Mammary epithelial cell (primary cell): ENCODE measurements at regions of chr1 and their contacts with region 1.

Region 1: DNA sequence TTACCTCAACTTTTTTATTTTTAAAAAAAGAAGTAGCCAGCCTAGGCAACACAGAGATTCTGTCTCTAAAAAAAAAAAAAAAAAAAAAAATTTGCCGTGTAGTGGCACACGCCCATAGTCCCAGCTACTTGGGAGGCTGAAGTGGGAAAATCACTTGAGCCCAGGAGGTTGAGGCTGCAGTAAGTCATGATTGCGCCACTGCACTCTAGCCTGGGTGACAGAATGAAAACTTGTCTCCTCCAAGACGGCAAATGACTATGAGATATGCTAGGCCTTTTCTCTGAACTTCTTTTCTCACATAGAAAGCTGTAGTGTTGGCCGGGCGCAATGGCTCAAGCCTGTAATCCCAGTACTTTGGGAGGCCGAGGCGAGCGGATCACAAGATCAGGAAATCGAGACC is 24.7 kb upstream of the PTCH2 start:
- DNase-seq: no peak
- H3K4me3 ChIP-seq: no peak overlapping the region
- H3K27ac ChIP-seq: no peak overlapping the region
- H3K4me1 ChIP-seq: no peaks in the 10 kb centered on the region
- H3K27me3 ChIP-seq: no peaks in the 10 kb centered on the region
- CTCF ChIP-seq: no peak

Region 2: DNA sequence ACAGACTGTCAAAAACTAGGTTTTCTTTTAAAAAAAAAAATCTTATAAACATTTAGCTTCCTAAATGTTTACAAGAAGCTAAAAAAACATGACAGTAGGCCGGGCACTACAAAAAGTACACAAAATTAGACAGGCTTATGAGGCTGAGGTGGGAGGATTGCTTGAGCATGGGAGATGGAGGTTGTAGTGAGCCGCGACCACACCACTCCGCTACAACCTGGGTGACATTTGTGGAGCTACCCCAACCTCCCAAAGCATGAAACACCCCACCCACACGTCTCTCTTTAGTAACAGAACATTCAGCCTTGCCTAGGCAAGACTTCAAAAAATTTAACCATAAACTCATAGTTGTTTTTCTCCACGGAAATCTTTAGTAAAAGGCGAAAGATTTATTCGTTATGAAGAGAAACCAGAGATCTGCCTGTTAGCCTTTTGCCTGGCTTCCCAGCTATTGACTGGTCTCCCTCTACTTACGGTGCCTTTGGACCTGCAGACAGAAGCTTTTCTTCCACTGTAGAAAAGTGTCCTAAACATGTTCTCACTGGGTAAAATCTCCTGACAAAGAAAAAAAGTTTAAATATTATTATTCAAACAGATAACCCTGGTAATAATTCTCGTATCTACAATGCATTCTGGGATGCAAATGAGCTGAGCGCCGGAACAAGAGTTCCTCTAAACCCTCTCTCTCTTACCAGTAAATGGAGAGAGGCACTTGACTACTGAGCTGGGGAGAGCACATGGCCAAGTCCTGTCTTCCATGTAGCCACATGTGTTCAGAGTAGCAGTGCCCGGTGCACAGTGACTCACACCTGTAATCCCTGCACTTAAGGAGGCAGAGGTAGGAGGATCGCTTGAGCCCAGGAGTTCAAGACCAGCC is 146.1 kb before region 1 on chr1:
- CTCF ChIA-PET with region 1: no interaction called
- dilution Hi-C with region 1: no loop called
- in situ Hi-C with region 1: no loop called
- intact Hi-C with region 1: no loop called
- DNase-seq: peak; percentile 73
- H3K4me3 ChIP-seq: no peak overlapping the region
- H3K27ac ChIP-seq: peak overlapping the region; percentile 36
- H3K4me1 ChIP-seq: peaks cover 2% of the 10 kb centered on the region
- H3K27me3 ChIP-seq: no peaks in the 10 kb centered on the region
- CTCF ChIP-seq: no peak

Region 3: DNA sequence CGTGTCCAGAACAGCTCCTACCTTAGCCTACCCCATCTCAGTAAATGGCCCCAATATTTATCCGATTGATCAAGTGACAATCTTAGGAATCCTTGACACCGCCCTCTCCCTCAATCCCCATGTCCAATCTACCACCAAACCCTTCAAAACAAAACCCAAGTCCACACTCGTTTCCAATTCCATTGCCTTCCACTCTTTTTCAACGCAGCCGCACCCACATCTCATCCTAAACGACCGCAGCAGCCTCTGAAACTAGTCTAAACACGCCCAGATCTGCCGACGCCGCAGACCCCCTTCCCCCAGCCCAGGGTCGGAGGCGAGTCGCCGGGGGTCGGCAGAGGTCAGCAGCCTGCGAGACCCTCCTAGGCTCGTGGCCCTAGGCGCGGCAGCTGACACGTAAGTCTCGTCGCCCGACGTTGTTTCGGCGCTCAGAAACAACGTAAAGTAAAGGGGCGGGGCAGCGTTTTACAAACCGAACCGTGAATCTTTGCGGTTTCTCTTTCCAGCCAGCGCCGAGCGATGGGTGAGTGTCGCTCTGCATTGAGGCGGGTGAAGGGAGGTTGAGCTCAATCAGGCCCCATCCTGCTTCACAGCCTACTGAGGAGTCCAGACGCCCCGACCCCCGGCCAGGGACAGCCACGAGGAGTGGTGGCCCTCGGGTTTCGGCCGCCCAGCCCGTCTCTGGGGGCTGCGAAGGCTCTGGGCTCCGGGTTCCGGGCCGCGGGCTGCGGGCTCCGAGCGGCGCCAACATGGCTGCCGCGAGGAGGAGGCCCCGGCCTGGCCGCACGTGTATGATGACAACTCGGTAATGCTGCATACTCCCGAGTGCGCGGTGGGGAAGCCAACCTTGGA is 92.5 kb before region 1 on chr1 and contains the start of gene RPS8:
- CTCF ChIA-PET with region 1: no interaction called
- dilution Hi-C with region 1: loop called (anchors 5 kb)
- in situ Hi-C with region 1: no loop called
- intact Hi-C with region 1: no loop called
- DNase-seq: peak; percentile 92
- H3K4me3 ChIP-seq: peak within 1 kb of the TSS; percentile 83 to 92 (median 86)
- H3K27ac ChIP-seq: peak within 1 kb of the TSS; percentile 98
- H3K4me1 ChIP-seq: peaks cover 15% of the 10 kb centered on the region
- H3K27me3 ChIP-seq: no peaks in the 10 kb centered on the region
- CTCF ChIP-seq: no peak
- total RNA-seq, gene RPS8: 1,053 to 1,537 TPM

Region 4: DNA sequence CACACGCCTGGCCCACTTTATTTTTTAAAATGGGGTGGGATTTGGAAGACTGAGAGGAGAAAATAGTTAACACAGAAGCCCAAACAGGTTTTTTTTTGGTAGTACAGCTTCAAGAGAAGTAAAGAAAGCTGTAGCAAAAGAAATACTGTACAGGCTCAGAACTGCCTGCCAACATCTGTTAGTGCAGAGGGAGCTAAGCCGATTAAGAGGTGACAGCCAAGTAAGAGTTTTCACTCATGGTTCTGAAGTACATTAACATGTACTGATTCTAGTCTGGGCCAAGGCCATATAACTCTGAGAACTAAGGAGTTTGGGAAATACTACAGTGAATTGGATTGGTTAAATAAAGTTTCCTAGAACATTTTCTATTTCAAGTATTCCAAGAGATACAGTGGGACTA is 67.0 kb after region 1 on chr1:
- CTCF ChIA-PET with region 1: no interaction called
- dilution Hi-C with region 1: loop called (anchors 5 kb)
- in situ Hi-C with region 1: no loop called
- intact Hi-C with region 1: no loop called
- DNase-seq: no peak
- H3K4me3 ChIP-seq: no peak overlapping the region
- H3K27ac ChIP-seq: no peak overlapping the region
- H3K4me1 ChIP-seq: no peaks in the 10 kb centered on the region
- H3K27me3 ChIP-seq: no peaks in the 10 kb centered on the region
- CTCF ChIP-seq: no peak